HepG2 (cell line): ENCODE measurements at regions of chr15 and their contacts with region 1.

Region 1: DNA sequence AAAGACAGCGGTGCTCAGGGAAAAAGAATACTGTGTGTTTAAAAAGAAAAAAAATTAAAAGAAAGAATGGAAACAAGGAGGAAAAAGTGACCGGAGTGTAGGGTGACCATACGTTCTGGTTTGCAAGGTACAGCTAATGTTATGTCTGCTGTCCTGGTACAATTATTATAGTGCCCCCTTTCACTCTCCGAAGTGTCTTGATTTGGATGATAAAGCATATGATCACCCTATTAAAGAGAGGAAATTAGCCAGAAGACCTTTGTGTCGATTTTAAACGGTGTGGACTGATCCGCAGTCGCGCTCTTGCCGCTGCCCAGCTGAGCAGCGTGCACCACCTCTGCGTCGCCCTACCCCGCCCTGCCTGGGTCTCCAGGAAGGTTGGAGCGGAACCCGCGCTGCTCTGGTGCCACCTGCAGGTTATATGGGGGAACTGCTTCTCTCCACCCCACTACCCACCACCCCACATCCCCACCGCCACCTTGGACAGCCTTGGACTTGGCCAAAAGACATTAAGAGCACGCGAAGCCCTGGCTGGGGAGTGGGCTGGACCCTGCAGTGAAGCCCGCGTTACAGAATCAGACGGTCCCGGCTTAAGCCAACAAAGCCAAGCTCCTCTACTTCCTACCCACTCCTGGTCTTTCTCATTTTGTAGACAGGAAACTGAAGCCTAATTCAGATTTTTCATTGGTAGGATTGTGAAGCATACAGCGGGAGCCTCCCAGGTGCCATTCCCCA is 41.2 kb upstream of the UBE2Q2 start:
- DNase-seq: peak; percentile 58
- ATAC-seq: peak; percentile 99
- H3K4me3 ChIP-seq: peak overlapping the region in 1 of 3 experiments; percentile 49; a peak in 2 of 6 replicates
- H3K27ac ChIP-seq: no peak overlapping the region
- H3K4me1 ChIP-seq: peaks cover 9% of the 10 kb centered on the region; the same call in 1 of the 2 replicates
- H3K27me3 ChIP-seq: peaks cover 0 to 9% of the 10 kb centered on the region in 2 experiments; a peak in 3 of 5 replicates
- CTCF ChIP-seq: peak; percentile 92
- EP300 ChIP-seq: no peak
- POLR2A ChIP-seq: no peak
- RAD21 ChIP-seq: peak; percentile 93

Region 2: GRCh38 chr15:75684642-75685041 is 117.4 kb before region 1 on chr15:
- CTCF ChIA-PET with region 1: interaction called, 6 read pairs
- POLR2A ChIA-PET with region 1: no interaction called
- in situ Hi-C with region 1: loop called (anchors 10 kb)
- intact Hi-C with region 1: loop called (anchors 2 kb)
- DNase-seq: peak; percentile 56
- ATAC-seq: peak; percentile 44
- H3K4me3 ChIP-seq: peak overlapping the region in 1 of 3 experiments; percentile 33; a peak in 1 of 6 replicates
- H3K27ac ChIP-seq: no peak overlapping the region
- H3K4me1 ChIP-seq: peaks cover 41% of the 10 kb centered on the region
- H3K27me3 ChIP-seq: peaks cover 6 to 25% of the 10 kb centered on the region in 2 experiments
- CTCF ChIP-seq: peak; percentile 69
- EP300 ChIP-seq: no peak
- POLR2A ChIP-seq: no peak
- RAD21 ChIP-seq: peak; percentile 44; the same call in 1 of the 2 replicates

Region 3: GRCh38 chr15:75723847-75724660 is 78.0 kb before region 1 on chr15:
- CTCF ChIA-PET with region 1: interaction called, 8 read pairs
- POLR2A ChIA-PET with region 1: no interaction called
- in situ Hi-C with region 1: loop called (anchors 10 kb)
- intact Hi-C with region 1: loop called (anchors 1 kb)
- DNase-seq: peak; percentile 81
- ATAC-seq: peak; percentile 83
- H3K4me3 ChIP-seq: peak overlapping the region in 2 of 3 experiments; percentile 22 to 60; a peak in 4 of 6 replicates
- H3K27ac ChIP-seq: peak overlapping the region; percentile 34
- H3K4me1 ChIP-seq: peaks cover 27% of the 10 kb centered on the region
- H3K27me3 ChIP-seq: peaks cover 0 to 6% of the 10 kb centered on the region in 2 experiments; a peak in 2 of 5 replicates
- CTCF ChIP-seq: no peak
- EP300 ChIP-seq: peak in 1 of 2 experiments; percentile 66; a peak in 2 of 4 replicates
- POLR2A ChIP-seq: peak in 1 of 2 experiments; percentile 59; a peak in 2 of 4 replicates
- RAD21 ChIP-seq: 0 out of 2 replicates have a peak, but pooled peaks have one; percentile 13

Region 4: DNA sequence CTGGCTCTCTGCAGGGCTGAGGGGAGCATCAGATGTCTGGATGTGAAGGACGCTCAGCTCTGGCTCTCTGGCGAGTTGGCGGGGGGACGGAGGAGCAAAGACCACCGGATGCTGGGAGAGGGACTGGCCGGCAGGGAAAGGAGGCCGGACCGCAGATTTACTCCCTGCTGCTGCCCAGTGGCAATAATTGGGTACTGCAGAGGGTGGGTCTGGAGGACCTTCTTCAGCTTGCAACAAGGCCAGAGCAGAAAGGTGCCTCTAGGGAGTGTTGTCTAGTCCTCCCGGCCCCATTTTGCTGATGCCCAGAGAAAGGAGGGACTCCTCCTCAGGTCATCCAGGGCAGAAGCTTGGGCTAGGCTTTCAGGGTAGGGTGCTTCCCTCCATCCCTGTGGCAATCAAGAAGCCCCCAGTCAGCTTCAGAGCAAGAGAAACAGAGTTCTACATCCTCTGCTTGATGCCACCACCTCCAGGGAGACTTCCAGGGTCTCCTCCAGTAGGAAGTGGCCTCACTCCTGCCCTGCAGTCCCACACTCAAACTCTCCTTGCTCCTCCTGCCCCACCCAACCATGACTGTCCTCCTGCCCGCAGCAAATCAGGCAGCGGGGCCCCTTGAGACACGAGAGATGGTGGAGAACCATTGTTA is 69.1 kb before region 1 on chr15:
- CTCF ChIA-PET with region 1: interaction called, 11 read pairs
- POLR2A ChIA-PET with region 1: no interaction called
- in situ Hi-C with region 1: loop called (anchors 10 kb)
- intact Hi-C with region 1: loop called (anchors 1 kb)
- DNase-seq: peak; percentile 50
- ATAC-seq: peak; percentile 79
- H3K4me3 ChIP-seq: peak overlapping the region in 1 of 3 experiments; percentile 35; a peak in 1 of 6 replicates
- H3K27ac ChIP-seq: no peak overlapping the region
- H3K4me1 ChIP-seq: peaks cover 10% of the 10 kb centered on the region; the same call in 1 of the 2 replicates
- H3K27me3 ChIP-seq: no peaks in the 10 kb centered on the region
- CTCF ChIP-seq: peak; percentile 86
- EP300 ChIP-seq: no peak
- POLR2A ChIP-seq: no peak
- RAD21 ChIP-seq: peak; percentile 58

Region 5: GRCh38 chr15:75758071-75758872 is 43.8 kb before region 1 on chr15:
- CTCF ChIA-PET with region 1: no interaction called
- POLR2A ChIA-PET with region 1: no interaction called
- in situ Hi-C with region 1: no loop called
- intact Hi-C with region 1: loop called (anchors 10 kb)
- DNase-seq: peak; percentile 77
- ATAC-seq: peak; percentile 82
- H3K4me3 ChIP-seq: peak overlapping the region; percentile 42 to 49 (median 47)
- H3K27ac ChIP-seq: peak overlapping the region; percentile 37
- H3K4me1 ChIP-seq: peaks cover 47% of the 10 kb centered on the region
- H3K27me3 ChIP-seq: no peaks in the 10 kb centered on the region
- CTCF ChIP-seq: peak; percentile 51
- EP300 ChIP-seq: no peak
- POLR2A ChIP-seq: peak in 1 of 2 experiments; percentile 69; a peak in 2 of 4 replicates
- RAD21 ChIP-seq: 0 out of 2 replicates have a peak, but pooled peaks have one; percentile 8

Region 6: DNA sequence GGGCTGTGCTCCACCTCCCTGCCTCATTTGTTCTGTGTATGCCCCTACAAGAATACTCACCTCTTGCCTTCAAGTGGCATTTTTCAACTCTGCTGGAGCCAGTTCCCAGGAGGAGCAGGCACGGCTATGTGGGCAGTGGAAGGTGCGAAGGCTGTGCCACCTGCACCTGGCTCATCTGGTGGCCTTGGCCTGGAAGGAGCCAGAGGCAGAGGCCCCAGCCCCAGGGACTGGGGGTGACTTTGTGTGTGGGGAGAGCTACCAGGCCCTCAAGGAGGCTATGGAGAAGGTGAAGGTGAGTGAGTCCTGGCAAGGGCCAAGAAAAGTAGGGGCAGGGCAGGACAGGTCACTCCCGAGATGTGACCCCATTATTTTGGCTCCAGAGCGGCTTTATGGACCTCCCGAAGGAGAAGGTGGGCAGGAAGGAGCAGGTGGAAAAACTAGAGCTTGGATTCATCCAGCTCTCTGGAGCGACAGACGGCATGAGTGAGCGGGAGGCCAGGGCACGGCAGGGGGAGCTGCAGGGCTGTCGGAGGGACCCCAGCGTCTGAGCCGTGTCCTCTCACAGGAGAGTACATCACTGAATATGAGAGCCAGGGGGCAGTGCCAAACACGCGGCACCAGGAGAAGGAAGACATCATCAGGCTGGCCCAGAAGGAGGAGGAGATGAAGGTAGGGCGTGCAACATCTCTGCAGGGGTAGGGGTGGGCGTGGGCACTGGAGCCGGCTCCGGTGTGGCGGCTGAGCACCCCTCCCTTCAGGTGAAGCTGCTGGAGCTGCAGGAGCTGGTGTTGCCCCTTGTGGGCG is 16.1 kb before region 1 on chr15:
- CTCF ChIA-PET with region 1: no interaction called
- POLR2A ChIA-PET with region 1: no interaction called
- in situ Hi-C with region 1: no loop called
- intact Hi-C with region 1: no loop called
- DNase-seq: peak; percentile 31
- ATAC-seq: peak; percentile 56; the same call in 2 of the 3 replicates
- H3K4me3 ChIP-seq: no peak overlapping the region
- H3K27ac ChIP-seq: no peak overlapping the region
- H3K4me1 ChIP-seq: no peaks in the 10 kb centered on the region
- H3K27me3 ChIP-seq: peaks cover 2 to 19% of the 10 kb centered on the region in 2 experiments; a peak in 4 of 5 replicates
- CTCF ChIP-seq: peak; percentile 64
- EP300 ChIP-seq: no peak
- POLR2A ChIP-seq: no peak
- RAD21 ChIP-seq: peak; percentile 42; the same call in 1 of the 2 replicates